Activated T-helper 2 cell treated with anti-CD3 and anti-CD28 coated beads, Interferon-gamma antibody, Interleukin-2, Interleukin-4, amounts not matched to agents 10 μg/mL and 5 μg/mL and 100 μg/mL, durations not matched to agents 14 hours and 24 hours and 36 hours (primary cell): ENCODE measurements at regions of chr18 and their contacts with region 1.

Region 1: GRCh38 chr18:46051731-46052461 is 20.2 kb downstream of the PSTPIP2 start:
- DNase-seq: no peak
- H3K4me3 Mint-ChIP-seq: no peak overlapping the region
- H3K27ac Mint-ChIP-seq: no peak overlapping the region
- H3K4me1 Mint-ChIP-seq: peaks cover 50% of the 10 kb centered on the region
- H3K27me3 Mint-ChIP-seq: no peaks in the 10 kb centered on the region

Region 2: DNA sequence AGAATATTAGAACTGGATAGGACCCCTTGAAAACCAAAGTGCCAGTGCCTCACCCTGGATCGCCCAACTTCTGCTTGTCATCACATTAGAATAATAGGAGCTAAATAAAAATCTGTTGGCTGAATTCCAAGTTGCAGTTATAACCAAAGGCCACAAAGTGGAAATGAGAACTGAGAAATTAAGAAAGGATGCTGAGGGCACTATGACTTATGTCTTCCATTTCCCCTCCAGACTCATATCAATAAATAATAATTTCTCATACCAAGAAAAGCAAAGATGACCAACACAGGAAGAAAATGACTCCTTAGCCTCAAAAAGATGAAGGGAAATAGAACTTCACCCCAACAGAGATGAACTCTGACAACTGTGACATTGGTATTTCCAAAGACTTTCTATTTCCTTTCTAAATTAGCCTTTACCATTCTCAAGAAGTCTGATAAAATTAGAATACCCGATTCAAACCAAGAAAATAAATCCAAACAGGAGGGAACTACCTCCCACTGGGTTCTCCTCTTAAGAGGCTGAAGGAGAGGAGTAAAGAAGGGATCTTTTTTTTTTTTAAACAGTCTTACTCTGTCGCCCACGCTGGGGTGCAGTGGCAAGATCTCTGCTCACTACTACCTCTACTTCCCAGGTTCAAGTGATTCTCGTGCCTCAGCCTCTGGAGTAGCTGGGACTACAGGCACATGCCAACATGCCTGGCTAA is 38.3 kb before region 1 on chr18:
- intact Hi-C with region 1: loop called (anchors 5 kb)
- DNase-seq: no peak
- H3K4me3 Mint-ChIP-seq: no peak overlapping the region
- H3K27ac Mint-ChIP-seq: peak overlapping the region; percentile 53
- H3K4me1 Mint-ChIP-seq: peaks cover 18% of the 10 kb centered on the region
- H3K27me3 Mint-ChIP-seq: no peaks in the 10 kb centered on the region